ENCODE measurements at regions of chr1 and their contacts with region 1.

Region 1: DNA sequence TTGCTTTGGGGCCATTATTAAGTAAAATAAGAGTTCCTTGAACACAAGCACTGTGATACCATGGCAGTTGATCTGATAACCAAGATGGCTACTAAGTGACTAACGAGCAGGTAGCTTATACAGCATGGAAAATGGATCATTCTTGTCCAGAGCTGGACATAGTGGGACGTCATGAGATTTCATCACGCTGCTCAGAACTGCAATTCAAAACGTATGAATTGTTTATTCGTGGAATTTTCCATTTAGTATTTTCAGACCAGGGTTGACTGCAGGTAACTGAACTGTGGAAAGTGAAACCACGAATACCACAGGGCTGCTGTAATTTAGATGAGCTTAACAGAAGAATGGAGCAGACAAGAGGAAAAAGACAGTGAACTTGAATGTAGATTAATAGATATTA is 38.9 kb downstream of the CCDC18 start:
- DNase-seq: no peak
- ATAC-seq: no peak
- H3K4me3 ChIP-seq: no peak overlapping the region
- H3K27ac ChIP-seq: no peak overlapping the region
- H3K4me1 ChIP-seq: no peaks in the 10 kb centered on the region; the same call in 1 of the 2 replicates
- H3K27me3 ChIP-seq: no peaks in the 10 kb centered on the region
- CTCF ChIP-seq: no peak
- POLR2A ChIP-seq: no peak
- RAD21 ChIP-seq: no peak

Region 2: GRCh38 chr1:93095804-93096585 is 123.4 kb before region 1 on chr1:
- CTCF ChIA-PET with region 1: no interaction called
- POLR2A ChIA-PET with region 1: no interaction called
- dilution Hi-C with region 1: no loop called
- in situ Hi-C with region 1: no loop called
- intact Hi-C with region 1: no loop called
- DNase-seq: no peak
- ATAC-seq: no peak
- H3K4me3 ChIP-seq: no peak overlapping the region
- H3K27ac ChIP-seq: no peak overlapping the region
- H3K4me1 ChIP-seq: peaks cover 5% of the 10 kb centered on the region
- H3K27me3 ChIP-seq: no peaks in the 10 kb centered on the region
- CTCF ChIP-seq: no peak
- POLR2A ChIP-seq: no peak
- RAD21 ChIP-seq: no peak

Region 3: GRCh38 chr1:93206567-93206954 is 12.9 kb before region 1 on chr1:
- CTCF ChIA-PET with region 1: interaction called, 3 read pairs
- POLR2A ChIA-PET with region 1: no interaction called
- dilution Hi-C with region 1: no loop called
- in situ Hi-C with region 1: no loop called
- intact Hi-C with region 1: loop called (anchors 1 kb)
- DNase-seq: no peak
- ATAC-seq: no peak
- H3K4me3 ChIP-seq: no peak overlapping the region
- H3K27ac ChIP-seq: no peak overlapping the region
- H3K4me1 ChIP-seq: no peaks in the 10 kb centered on the region
- H3K27me3 ChIP-seq: no peaks in the 10 kb centered on the region
- CTCF ChIP-seq: no peak
- POLR2A ChIP-seq: no peak
- RAD21 ChIP-seq: no peak

Region 4: DNA sequence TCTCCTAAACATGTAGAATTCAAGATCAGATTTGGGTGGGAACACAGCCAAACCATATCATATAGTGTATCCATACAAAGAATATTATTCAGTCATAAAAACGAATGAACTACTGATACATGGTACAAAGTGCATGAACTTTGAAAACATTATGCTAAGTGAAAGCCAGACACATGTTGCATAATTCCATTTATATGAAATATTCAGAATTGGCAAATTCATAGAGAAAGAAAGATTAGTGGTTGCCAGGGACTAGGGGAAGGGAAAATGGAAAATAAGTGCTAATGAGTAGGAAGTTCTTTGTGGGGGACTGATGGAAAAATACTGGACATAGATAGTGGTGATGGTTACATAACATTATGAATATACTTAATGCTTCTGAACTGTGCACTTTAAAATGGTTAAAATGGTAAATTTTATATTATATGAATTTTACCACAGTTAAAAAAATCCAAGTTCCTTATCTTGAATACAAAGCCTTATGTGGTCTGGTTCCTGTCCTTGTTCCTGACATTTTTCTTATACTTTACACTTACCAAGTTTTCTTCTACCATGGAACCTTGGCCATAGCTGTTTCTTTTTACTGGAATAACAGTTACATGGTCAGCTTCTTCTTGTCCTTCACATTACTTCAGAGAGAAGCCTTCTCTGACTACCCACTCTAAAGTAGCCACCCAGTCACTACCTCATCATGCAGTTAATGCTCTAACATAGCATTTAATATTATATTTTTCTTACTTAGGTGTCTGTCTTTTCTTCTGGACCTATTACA is 25.0 kb after region 1 on chr1:
- CTCF ChIA-PET with region 1: no interaction called
- POLR2A ChIA-PET with region 1: no interaction called
- dilution Hi-C with region 1: no loop called
- in situ Hi-C with region 1: no loop called
- intact Hi-C with region 1: loop called (anchors 5 kb)
- DNase-seq: no peak
- ATAC-seq: no peak
- H3K4me3 ChIP-seq: no peak overlapping the region
- H3K27ac ChIP-seq: no peak overlapping the region
- H3K4me1 ChIP-seq: peaks cover 2% of the 10 kb centered on the region; the same call in 1 of the 2 replicates
- H3K27me3 ChIP-seq: no peaks in the 10 kb centered on the region
- CTCF ChIP-seq: no peak
- POLR2A ChIP-seq: no peak
- RAD21 ChIP-seq: no peak